Right ventricle myocardium inferior (tissue), 1 donor: ENCODE measurements at regions of chrX and their contacts with region 1.

Region 1: DNA sequence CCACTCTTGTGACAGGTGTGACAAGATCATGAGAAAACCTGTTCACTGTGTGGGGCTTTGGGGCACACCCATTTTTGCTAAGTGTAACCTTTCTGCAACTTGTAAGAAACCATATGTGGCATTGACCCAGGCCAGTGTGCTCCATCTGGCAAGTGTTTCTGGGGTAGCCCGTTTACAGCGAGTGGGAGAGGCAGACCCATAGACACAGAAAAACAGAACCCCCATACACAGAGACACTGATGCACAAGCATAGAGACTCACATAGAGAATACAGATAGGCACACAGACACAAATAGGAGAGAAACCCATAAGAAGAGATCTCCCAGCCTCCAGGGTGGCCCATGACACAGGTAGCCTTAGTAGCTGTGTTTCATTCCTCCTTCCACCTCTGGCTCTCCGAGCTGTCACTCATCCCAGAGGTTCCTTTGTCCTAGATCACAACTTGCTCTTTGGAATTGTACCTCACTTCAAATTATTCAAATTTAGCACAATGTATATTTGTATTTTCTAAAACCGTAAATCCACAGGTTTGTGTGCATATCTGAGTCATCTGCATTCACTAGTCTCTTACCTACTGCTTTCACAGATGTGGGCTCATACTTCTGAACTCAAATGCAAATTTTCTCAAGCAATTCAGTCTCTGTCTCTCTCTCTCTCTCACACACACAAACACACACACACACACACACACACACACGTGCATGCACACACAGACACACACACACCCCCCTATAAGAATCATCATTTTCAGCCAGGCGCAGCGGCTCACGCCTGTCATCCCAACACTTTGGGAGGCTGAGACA is 114.4 kb downstream of the SH3KBP1 start:
- DNase-seq: peak; percentile 14
- ATAC-seq: no peak

Region 2: DNA sequence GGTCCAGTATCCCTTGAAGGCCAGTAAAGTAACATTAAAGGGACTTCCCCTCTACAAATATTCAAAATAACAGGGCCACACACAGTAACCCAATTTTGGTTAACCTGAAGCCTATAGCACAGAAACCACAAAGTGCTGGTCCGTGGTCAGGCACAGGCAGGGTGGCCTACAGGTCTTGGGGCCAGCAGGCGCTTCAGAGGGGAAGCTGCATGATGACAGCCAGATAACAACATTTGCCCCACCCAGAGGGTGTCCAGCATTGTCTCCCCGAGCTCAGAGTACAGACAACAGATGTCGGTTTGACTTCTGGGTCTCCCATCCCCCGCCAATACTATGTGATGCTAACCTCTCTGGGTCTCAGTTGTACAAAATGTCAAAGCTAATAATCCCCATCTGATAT is 63.3 kb after region 1 on chrX:
- intact Hi-C with region 1: no loop called
- DNase-seq: no peak
- ATAC-seq: no peak

Region 3: DNA sequence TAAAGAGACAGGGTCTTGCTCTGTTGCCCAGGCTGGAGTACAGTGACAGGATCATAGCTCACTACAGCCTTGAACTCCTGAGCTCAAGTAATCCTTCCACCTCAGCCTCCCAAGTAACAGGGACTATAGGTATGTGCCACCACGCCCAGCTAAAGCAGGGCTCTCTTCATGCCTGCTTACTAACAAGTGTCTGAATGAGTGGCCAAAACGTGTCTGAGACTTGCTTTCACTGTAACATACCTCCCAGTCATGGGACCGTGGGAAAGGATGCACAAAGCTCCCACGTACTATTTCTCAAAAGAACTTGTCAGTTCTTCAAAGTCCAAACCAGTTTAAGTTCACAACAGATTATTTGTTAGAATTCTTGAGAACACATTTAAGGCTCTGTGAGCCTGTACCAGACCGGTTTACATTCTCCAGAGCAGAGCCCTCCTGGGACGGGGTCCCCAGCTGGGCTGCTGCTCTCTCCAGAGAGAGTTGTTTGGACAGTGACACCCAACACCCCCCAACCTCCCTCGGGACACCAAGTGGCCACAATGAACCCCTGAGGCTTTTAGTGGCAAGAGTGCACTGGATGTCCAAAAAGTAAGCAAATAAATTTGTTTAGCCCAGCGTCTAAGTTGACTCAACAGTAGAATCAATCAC is 90.3 kb after region 1 on chrX:
- intact Hi-C with region 1: loop called (anchors 10 kb)
- DNase-seq: no peak
- ATAC-seq: no peak